ENCODE measurements at regions of chr2 and their contacts with region 1.

Region 1: GRCh38 chr2:23926750-23927571 is at the start of gene ATAD2B:
- DNase-seq: peak; percentile 91 to 97 (median 96)
- ATAC-seq: peak; percentile 95 to 97
- H3K4me3 ChIP-seq: peak within 1 kb of the TSS; percentile 84
- H3K27ac ChIP-seq: peak within 1 kb of the TSS; percentile 95
- H3K4me1 ChIP-seq: peaks cover 6% of the 10 kb centered on the region
- H3K27me3 ChIP-seq: no peaks in the 10 kb centered on the region
- total RNA-seq, gene ATAD2B: 9.3 to 15.1 (median 10.3) TPM

Region 2: DNA sequence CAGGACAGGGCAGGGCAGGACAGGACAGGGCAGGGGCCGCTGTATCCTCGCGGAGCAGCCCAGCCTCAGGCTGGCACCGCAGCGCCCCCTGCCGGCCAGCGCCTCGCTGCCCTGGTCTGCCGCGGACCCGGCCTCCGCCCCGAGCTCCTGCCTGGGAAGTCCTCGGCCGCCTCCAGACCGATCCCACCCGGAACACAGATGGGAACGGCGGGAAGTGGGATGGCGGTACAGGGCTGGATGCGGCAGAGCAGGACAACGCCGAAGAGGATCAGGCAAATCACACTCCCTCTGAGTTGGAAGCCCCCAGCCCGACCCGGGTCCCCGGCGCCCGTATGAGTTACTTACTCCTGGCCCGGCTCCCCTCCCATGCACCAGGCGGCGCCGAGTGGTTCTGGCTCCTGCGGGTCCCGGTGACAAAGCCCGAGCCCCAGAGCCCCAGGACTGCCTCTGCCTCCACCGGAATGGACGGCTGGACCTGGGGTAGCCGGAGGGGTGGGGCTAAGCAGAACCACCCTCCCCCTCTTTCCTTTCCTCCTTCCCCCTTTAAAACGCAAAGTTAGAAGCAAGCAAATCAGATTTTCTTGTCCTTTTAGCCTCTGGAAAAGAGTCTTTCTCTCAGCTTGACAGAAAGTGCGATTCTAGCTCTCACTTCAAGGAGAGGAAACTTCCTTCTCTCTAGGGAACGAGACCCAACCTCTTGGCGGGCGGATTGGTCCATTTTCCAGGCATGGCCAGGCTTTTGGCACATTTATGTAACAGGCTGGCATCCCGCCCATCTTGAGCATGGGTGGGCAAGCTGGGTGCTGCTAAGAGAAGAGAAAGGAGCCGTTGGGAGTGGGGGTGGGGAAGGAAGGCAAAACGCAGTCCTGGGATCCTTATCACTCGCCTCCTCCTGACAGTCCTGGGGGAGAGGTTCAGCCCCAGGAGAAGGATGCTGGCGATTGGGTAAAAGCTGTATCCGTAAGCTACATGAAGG is 157.7 kb after region 1 on chr2 and contains the start of gene TP53I3:
- intact Hi-C with region 1: loop called in 2 of 4 experiments (anchors 10 kb)
- DNase-seq: peak; percentile 89 to 96 (median 96)
- ATAC-seq: peak; percentile 97
- H3K4me3 ChIP-seq: peak within 1 kb of the TSS; percentile 64
- H3K27ac ChIP-seq: peak within 1 kb of the TSS; percentile 99
- H3K4me1 ChIP-seq: no peaks in the 10 kb centered on the region
- H3K27me3 ChIP-seq: no peaks in the 10 kb centered on the region
- total RNA-seq, gene TP53I3: 6.0 to 9.7 (median 7.3) TPM